ENCODE measurements at regions of chr11 and their contacts with region 1.

Region 1: GRCh38 chr11:73478738-73479347 is 102.6 kb downstream of the RELT start:
- DNase-seq: peak; percentile 61
- H3K4me3 Mint-ChIP-seq: no peak overlapping the region
- H3K27ac Mint-ChIP-seq: no peak overlapping the region
- H3K4me1 Mint-ChIP-seq: peaks cover 15% of the 10 kb centered on the region
- H3K27me3 Mint-ChIP-seq: no peaks in the 10 kb centered on the region
- CTCF ChIP-seq: peak; percentile 86

Region 2: DNA sequence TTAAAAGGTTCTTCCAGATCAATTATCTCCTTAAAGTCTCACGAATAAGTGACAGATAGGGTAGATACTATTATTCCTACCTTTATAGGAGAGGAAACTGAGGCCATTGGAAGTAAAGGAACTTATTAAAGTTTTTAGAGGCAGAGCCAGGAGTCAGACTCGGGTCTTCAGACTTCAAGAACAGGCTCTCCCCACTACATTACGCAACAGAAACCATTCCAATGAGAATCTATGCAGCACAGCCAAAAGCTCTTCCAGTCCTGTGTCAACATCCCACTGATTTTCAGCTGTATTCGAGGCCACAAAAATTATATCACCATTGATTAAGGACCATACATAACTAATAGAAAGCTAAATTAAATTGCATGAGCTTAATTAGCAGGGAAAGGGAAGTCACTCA is 25.3 kb before region 1 on chr11:
- CTCF ChIA-PET with region 1: interaction called, 12 read pairs
- POLR2A ChIA-PET with region 1: no interaction called
- intact Hi-C with region 1: no loop called
- DNase-seq: peak; percentile 16
- H3K4me3 Mint-ChIP-seq: no peak overlapping the region
- H3K27ac Mint-ChIP-seq: no peak overlapping the region
- H3K4me1 Mint-ChIP-seq: no peaks in the 10 kb centered on the region
- H3K27me3 Mint-ChIP-seq: no peaks in the 10 kb centered on the region
- CTCF ChIP-seq: no peak

Region 3: GRCh38 chr11:73463359-73463758 is 15.5 kb before region 1 on chr11:
- CTCF ChIA-PET with region 1: interaction called, 22 read pairs
- POLR2A ChIA-PET with region 1: no interaction called
- intact Hi-C with region 1: no loop called
- DNase-seq: peak; percentile 8
- H3K4me3 Mint-ChIP-seq: no peak overlapping the region
- H3K27ac Mint-ChIP-seq: no peak overlapping the region
- H3K4me1 Mint-ChIP-seq: peaks cover 6% of the 10 kb centered on the region
- H3K27me3 Mint-ChIP-seq: no peaks in the 10 kb centered on the region
- CTCF ChIP-seq: no peak

Region 4: DNA sequence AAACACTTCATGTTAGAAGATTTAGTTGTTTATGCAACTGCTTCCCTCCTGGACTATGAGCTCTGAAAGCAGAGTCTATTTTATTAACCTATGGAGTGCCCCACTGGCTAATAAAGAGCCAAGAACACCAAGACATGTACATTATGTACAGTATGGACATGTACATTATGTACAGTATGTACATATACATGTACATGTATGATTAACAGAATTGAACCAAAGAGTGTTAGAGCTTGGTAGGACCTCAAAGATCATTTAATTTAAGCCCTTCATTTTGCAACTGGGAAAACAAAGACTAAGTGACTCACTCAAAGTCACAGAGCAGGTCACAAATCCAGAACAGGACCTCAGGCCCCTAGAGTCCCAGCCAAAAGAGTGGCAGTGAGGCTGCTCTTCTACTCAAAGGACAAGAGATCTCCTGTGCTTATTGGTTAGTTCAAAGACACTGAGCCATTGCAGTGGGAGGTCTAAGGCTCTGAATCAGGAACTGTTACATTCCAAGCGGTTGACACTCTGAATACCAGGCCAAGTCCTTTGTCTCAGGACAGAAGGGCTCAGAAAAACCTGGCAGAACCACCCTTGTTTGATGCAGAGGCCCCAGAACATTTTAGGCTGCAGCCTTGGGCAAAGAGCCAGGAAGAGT is 15.2 kb after region 1 on chr11:
- CTCF ChIA-PET with region 1: interaction called, 34 read pairs
- POLR2A ChIA-PET with region 1: interaction called, 4 read pairs
- intact Hi-C with region 1: no loop called
- DNase-seq: peak; percentile 60
- H3K4me3 Mint-ChIP-seq: no peak overlapping the region
- H3K27ac Mint-ChIP-seq: no peak overlapping the region
- H3K4me1 Mint-ChIP-seq: peaks cover 6% of the 10 kb centered on the region
- H3K27me3 Mint-ChIP-seq: no peaks in the 10 kb centered on the region
- CTCF ChIP-seq: no peak

Region 5: DNA sequence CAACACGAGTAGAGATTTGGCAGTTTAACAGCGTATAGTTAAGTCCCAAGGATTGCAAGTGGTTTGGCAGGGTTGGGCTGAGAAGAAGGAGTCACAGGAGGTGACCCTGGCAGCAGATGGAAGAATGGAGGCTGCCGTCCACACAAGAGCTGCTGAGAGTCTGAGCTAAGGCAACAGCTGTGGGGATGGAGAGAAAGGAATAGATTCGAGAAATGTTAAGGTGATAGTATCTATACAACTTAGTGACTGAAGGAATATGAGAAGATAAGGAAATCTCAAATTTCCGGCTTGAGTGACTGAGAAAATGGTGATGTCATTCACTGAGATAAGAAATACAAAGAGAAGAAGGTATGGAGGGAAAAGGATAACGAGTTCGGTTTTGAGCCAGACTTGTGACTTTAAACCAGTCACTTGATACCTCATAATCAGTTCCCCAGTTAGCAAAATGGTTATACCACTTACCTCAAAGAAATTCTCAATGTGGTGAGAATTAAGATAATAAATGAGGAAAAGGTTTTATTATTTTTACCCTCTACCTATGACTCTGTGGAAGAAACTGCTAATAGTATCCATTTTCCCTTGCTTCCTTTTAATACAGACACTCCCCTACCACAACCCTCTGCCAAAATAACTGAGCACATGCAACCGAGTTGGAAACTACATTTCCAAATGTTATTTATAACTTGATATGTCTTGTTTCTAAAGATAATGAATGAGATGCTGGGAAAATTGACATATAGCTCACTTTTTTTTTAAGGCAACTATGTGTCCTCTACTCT is 88.3 kb after region 1 on chr11:
- CTCF ChIA-PET with region 1: interaction called, 15 read pairs
- POLR2A ChIA-PET with region 1: no interaction called
- intact Hi-C with region 1: no loop called
- DNase-seq: no peak
- H3K4me3 Mint-ChIP-seq: no peak overlapping the region
- H3K27ac Mint-ChIP-seq: no peak overlapping the region
- H3K4me1 Mint-ChIP-seq: peaks cover 9% of the 10 kb centered on the region
- H3K27me3 Mint-ChIP-seq: no peaks in the 10 kb centered on the region
- CTCF ChIP-seq: no peak

Region 6: DNA sequence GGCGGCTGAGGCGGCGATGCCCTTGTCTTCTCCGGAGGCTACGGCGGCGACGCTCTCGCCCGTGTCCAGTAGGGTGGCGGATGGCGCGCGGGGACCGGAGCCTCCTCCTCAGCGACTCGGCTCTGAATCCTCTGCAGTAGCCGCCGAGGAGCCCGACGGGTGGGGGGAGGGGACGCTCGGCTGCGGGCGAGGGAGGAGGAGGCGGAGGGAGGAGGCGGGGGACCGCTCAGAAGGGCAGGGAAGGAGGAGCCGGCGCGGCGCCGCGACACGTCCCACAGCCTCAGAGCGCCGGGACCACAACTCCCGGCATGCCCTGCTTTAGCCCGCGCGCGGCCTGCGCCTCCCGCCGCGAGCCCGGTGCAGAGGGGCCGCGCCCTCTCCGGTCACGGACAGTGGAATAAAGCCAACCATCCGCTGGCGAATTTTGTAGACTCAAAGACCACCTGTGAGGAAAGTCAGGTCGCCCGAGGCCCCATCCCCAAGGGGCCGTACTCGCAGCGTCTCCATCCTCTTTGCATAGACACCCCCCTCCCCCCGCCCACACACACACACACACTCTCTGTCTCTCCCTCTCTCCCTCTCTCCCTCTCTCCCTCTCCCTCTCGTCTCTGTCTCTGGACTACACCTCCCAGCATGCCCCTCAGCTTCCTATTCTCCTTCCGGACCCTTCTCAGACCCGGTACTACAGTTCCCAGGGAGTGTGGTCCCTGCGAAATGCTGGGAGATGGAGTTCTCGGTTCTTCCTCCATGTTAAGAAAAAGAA is 119.3 kb after region 1 on chr11 and contains the start of gene FAM168A:
- CTCF ChIA-PET with region 1: interaction called, 10 read pairs
- POLR2A ChIA-PET with region 1: interaction called, 7 read pairs
- intact Hi-C with region 1: loop called (anchors 1 kb)
- DNase-seq: peak; percentile 97
- H3K4me3 Mint-ChIP-seq: peak within 1 kb of the TSS; percentile 89
- H3K27ac Mint-ChIP-seq: peak within 1 kb of the TSS; percentile 76
- H3K4me1 Mint-ChIP-seq: peaks cover 18% of the 10 kb centered on the region
- H3K27me3 Mint-ChIP-seq: no peaks in the 10 kb centered on the region
- CTCF ChIP-seq: no peak
- total RNA-seq, gene FAM168A: 13.8 and 14.8 TPM in 2 replicates

Region 7: DNA sequence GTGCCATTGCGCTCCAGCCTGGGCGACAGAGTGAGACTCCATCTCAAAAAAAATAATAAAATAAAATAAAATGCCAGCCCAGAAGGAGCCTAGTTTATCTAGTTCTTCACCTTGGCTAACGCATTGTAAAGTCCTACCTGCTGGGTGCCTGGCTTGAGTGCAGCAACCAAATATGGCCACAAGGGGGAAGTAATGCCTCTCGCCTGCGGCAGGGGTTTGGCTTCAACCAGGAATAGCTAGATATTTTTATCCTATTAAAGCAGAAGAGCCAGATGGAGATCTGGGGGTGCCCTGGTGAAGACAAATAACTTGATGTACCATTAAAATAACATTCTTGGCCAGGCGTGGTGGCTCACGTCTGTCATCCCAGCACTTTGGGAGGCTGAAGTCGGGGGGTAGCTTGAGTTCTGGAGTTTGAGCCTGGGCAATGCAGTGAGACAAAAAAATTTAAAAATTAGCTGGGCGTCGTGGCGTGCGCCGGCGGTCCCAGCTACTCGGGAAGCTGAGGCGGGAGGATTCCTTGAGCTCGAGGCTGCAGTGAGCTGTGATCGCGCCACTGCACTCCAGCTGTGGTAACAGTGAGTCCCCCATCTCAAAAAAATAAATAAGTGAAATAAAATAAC is 147.0 kb after region 1 on chr11:
- CTCF ChIA-PET with region 1: interaction called, 22 read pairs
- POLR2A ChIA-PET with region 1: interaction called, 3 read pairs
- intact Hi-C with region 1: loop called (anchors 1 kb)
- DNase-seq: peak; percentile 77
- H3K4me3 Mint-ChIP-seq: no peak overlapping the region
- H3K27ac Mint-ChIP-seq: no peak overlapping the region
- H3K4me1 Mint-ChIP-seq: no peaks in the 10 kb centered on the region
- H3K27me3 Mint-ChIP-seq: peaks cover 30% of the 10 kb centered on the region
- CTCF ChIP-seq: peak; percentile 77

Measured in MCF 10A (cell line).